GM12878 (cell line): ENCODE measurements at regions of chr15 and their contacts with region 1.

Region 1: DNA sequence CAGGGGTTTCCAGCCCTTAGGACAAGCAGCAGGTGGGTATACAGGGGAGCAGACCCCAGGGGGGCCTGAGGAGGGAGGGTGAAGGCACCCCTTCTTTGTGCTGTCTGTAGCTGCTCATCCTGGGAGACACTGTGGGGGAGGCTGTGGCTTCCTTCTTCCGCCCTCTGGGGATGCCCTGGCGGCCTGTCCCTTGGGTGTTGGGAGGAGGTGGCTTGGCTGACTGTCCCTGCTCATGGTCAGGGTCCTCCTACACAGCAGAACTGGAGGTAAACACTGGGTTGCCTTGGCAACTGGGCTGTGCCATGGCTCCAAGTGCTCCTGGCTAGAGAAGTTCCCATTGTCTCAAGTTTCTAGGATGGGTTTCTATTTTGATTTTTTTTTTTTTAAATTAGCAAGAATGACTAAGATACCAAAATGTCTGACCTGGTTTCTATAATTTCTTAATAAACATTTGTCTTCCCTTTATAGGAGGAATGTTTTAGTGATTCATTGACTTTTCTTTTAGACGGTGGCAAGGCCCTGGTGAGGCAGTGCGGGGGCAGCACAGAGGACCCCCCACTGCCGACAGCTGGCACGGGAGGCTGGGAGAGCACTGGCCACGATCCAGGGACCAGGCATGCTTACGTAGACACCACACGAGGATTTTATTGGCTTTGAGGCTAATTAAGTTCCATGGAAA is 12.4 kb downstream of the KLF13 start:
- DNase-seq: peak; percentile 75
- ATAC-seq: peak; percentile 81
- H3K4me3 ChIP-seq: peak overlapping the region; percentile 22; the same call in 1 of the 2 replicates
- H3K27ac ChIP-seq: peak overlapping the region; percentile 83
- H3K4me1 ChIP-seq: peaks cover 91% of the 10 kb centered on the region
- H3K27me3 ChIP-seq: no peaks in the 10 kb centered on the region
- CTCF ChIP-seq: no peak
- EP300 ChIP-seq: peak in 1 of 2 experiments; percentile 19; a peak in 2 of 4 replicates
- POLR2A ChIP-seq: no peak
- RAD21 ChIP-seq: no peak

Region 2: DNA sequence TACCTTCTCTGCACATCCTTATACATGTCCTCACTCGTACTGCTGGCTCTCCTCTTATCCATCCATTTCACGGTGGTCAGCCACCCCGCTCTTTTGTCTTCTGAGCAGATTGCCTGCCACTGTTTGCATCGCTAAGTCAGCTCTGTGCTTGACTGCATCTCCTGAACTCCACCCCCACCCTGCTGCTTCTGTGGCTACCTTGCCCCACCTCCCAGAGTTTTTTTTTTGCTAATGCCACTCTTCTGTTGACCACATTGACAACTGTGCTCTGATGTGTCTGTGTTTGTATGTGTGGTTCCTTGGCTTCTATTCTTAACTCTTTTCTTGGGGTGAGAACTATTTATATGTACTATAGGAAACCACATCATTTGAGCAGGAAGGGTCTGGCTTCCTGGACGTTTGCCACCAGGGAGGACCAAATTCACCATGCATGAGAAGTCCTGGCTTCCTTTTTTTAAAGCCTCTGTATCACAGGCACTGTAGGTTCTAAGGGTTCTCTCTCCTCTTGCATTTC is 334.7 kb before region 1 on chr15:
- CTCF ChIA-PET with region 1: no interaction called
- POLR2A ChIA-PET with region 1: no interaction called
- RAD21 ChIA-PET with region 1: no interaction called
- SMC1A ChIA-PET with region 1: no interaction called
- in situ Hi-C with region 1: loop called (anchors 10 kb)
- intact Hi-C with region 1: no loop called
- DNase-seq: peak; percentile 99
- ATAC-seq: peak; percentile 95
- H3K4me3 ChIP-seq: 0 out of 2 replicates have a peak overlapping the region, but pooled peaks have one; percentile 14
- H3K27ac ChIP-seq: peak overlapping the region; percentile 29
- H3K4me1 ChIP-seq: peaks cover 19% of the 10 kb centered on the region
- H3K27me3 ChIP-seq: no peaks in the 10 kb centered on the region
- CTCF ChIP-seq: no peak
- EP300 ChIP-seq: peak; percentile 74 to 92; a peak in 3 of 4 replicates
- POLR2A ChIP-seq: peak; percentile 52; the same call in 1 of the 2 replicates
- RAD21 ChIP-seq: 0 out of 2 replicates have a peak, but pooled peaks have one; percentile 15

Region 3: DNA sequence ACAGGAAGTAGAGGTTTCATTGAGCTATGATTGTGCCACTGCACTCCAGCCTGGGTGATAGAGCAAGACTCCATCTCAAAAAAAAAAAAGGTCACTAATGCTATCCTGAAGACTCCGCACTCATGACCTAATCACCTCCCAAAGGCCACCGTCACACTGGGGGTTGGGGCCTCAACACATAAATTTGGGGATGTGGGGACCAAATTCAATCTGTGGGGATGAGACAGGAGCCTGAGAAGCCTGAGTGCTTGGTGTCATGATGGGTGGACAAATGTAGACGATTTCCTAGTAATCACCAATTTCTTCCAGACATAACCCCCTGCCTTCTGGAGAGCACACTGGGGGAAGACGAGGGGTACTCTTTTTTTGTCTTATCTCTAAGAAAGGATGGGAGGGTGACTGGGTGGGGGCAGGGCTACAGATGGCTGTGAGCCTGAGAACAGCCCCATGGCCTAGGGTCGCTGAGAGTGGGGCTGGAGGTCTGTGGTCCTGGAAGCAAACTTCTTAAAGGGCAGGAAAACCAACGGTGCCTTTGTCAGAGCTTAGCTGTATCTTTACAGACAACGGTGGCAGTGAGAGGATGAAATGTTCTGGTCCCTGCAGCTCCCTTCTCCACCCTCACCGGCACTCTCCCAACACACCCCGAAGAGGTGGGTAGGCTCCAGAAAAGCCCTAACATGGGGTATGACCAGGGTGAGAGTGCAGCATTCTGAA is 29.0 kb before region 1 on chr15:
- CTCF ChIA-PET with region 1: no interaction called
- POLR2A ChIA-PET with region 1: no interaction called
- RAD21 ChIA-PET with region 1: no interaction called
- SMC1A ChIA-PET with region 1: no interaction called
- in situ Hi-C with region 1: no loop called
- intact Hi-C with region 1: no loop called
- DNase-seq: no peak
- ATAC-seq: no peak
- H3K4me3 ChIP-seq: no peak overlapping the region
- H3K27ac ChIP-seq: no peak overlapping the region
- H3K4me1 ChIP-seq: peaks cover 17% of the 10 kb centered on the region
- H3K27me3 ChIP-seq: no peaks in the 10 kb centered on the region; a peak in 1 of 4 replicates
- CTCF ChIP-seq: no peak
- EP300 ChIP-seq: no peak
- POLR2A ChIP-seq: no peak
- RAD21 ChIP-seq: no peak

Region 4: GRCh38 chr15:31352911-31353811 is 14.1 kb after region 1 on chr15:
- CTCF ChIA-PET with region 1: interaction called, 3 read pairs
- POLR2A ChIA-PET with region 1: interaction called, 6 read pairs
- RAD21 ChIA-PET with region 1: interaction called, 16 read pairs
- SMC1A ChIA-PET with region 1: interaction called, 12 read pairs
- in situ Hi-C with region 1: no loop called
- intact Hi-C with region 1: no loop called
- DNase-seq: peak; percentile 83
- ATAC-seq: peak; percentile 87
- H3K4me3 ChIP-seq: peak overlapping the region; percentile 52; the same call in 1 of the 2 replicates
- H3K27ac ChIP-seq: peak overlapping the region; percentile 93
- H3K4me1 ChIP-seq: peaks cover 89% of the 10 kb centered on the region
- H3K27me3 ChIP-seq: no peaks in the 10 kb centered on the region
- CTCF ChIP-seq: peak in 2 of 3 experiments; percentile 7 to 22; a peak in 2 of 6 replicates
- EP300 ChIP-seq: peak; percentile 57 to 70; a peak in 3 of 4 replicates
- POLR2A ChIP-seq: peak; percentile 48; the same call in 1 of the 2 replicates
- RAD21 ChIP-seq: no peak